WTC11 (cell line): ENCODE measurements at regions of chr9 and their contacts with region 1.

Region 1: DNA sequence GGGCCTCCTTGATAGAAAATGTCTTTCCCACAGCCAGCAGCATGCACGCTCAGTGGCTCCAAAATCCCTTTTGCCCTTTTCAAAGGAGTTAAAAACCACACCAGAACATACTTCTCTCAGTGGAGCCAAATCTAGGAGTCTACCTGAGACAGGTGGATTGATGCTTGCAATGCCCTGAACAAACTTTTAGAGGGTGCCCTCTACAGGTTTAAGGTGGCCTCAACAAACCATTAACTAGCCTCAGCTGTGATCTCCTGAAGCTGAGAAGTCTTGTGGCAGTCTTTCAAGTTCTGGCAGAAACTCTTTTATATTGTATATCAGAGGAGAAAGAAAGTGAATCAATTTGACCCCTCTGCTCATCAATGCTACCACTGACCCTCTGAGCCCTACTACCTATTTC is 125.4 kb downstream of the MED27 start:
- DNase-seq: no peak
- ATAC-seq: peak; percentile 91
- H3K4me3 Mint-ChIP-seq: no peak overlapping the region
- H3K27ac Mint-ChIP-seq: no peak overlapping the region
- H3K4me1 Mint-ChIP-seq: no peaks in the 10 kb centered on the region
- H3K27me3 Mint-ChIP-seq: no peaks in the 10 kb centered on the region
- CTCF ChIP-seq: no peak; the same call in 1 of the 2 replicates

Region 2: DNA sequence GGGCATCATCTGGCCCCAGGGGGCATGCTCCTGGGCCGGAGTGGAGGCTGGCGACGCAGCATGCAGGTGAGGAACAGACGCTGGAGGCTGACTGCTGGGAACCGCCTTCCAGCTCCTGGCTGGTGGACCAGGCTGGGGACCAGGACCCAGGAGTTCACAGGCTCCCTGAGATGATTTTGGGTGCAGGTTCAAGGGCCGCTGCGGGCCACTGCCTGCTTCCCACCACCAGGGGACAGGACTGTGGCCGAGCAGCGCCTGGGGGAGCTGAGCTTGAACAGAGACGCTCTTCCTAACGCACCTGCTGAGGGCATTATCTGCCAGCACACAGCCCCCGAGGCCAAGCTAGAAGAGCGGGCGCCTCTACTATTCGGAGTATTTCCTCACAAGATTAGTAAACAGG is 82.3 kb before region 1 on chr9:
- CTCF ChIA-PET with region 1: interaction called, 21 read pairs
- POLR2A ChIA-PET with region 1: no interaction called
- DNase-seq: peak; percentile 62
- ATAC-seq: peak; percentile 59
- H3K4me3 Mint-ChIP-seq: no peak overlapping the region
- H3K27ac Mint-ChIP-seq: no peak overlapping the region
- H3K4me1 Mint-ChIP-seq: peaks cover 27% of the 10 kb centered on the region
- H3K27me3 Mint-ChIP-seq: no peaks in the 10 kb centered on the region
- CTCF ChIP-seq: peak; percentile 48